ENCODE measurements at regions of chr7 and their contacts with region 1.

Region 1: DNA sequence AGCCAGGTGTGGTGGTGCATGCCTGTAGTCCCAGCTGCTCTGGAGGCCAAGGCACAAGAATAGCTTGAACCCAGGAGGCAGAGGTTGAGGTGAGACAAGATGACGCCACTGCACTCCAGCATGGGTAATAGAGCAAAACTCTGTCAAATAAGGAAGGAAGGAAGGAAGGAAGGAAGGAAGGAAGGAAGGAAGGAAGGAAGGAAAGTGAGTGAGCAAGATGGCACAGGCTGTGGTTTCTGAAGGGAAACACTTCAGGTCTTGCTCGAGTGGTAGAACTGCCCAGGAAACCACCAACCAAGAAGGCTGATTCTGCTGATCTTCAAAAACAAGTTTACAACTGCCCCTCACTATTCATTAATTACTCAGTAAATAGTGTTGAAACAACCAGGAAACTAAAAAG is 45.2 kb downstream of the EZH2 start:
- DNase-seq: no peak
- H3K4me3 ChIP-seq: no peak overlapping the region
- H3K27ac ChIP-seq: no peak overlapping the region
- H3K27me3 ChIP-seq: no peaks in the 10 kb centered on the region
- CTCF ChIP-seq: no peak

Region 2: DNA sequence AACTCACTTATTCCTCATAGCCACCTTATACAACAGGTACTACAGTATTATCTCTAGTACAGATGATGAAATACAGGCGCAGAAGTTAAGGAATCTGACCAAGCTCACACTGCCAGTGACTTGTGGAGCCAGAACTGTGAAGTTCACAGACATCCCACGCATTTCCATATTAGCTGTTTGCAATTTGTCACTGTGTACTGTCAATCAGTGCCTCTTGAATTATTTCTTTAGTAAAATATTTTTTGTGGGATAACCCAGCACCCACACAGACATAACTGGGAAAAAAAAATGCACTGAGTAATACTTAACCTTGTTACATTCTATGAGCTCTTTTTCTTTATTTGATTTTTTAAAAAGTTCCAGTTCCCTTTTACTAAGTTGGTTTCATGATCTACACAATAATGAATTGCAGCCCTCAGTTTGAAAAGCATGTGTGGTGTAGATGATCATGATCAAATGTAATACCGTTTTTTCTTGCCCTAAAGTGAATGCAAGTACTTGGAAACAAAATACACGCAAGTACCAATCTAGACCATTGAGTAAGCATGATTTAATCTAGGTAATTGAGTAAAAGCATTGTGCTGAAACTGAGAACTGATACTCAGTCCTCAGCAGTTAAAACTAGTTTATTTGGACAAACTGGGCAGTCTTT is 126.1 kb before region 1 on chr7:
- CTCF ChIA-PET with region 1: no interaction called
- POLR2A ChIA-PET with region 1: interaction called, 10 read pairs
- DNase-seq: no peak
- H3K4me3 ChIP-seq: no peak overlapping the region
- H3K27ac ChIP-seq: no peak overlapping the region
- H3K27me3 ChIP-seq: no peaks in the 10 kb centered on the region
- CTCF ChIP-seq: no peak

Region 3: DNA sequence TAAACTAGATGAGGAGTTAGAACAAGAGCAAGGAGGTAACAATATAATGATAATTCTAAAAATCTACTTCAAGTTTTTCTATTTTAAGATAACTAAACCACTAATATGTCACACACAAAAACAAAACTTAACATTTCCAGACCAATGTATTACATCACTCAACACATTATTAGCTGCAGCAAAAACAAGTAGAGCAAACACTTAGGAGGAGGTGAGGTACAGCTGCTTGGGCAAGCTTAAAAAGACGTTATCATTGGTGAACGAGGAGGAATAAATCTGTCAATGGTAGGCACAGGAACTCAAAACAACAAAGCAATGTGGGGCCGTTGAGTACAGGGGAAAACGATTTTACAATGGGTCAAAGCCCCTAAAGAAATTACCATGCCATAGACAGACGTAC is 13.6 kb before region 1 on chr7:
- CTCF ChIA-PET with region 1: no interaction called
- POLR2A ChIA-PET with region 1: no interaction called
- DNase-seq: no peak
- H3K4me3 ChIP-seq: no peak overlapping the region
- H3K27ac ChIP-seq: no peak overlapping the region
- H3K27me3 ChIP-seq: no peaks in the 10 kb centered on the region
- CTCF ChIP-seq: no peak

Region 4: DNA sequence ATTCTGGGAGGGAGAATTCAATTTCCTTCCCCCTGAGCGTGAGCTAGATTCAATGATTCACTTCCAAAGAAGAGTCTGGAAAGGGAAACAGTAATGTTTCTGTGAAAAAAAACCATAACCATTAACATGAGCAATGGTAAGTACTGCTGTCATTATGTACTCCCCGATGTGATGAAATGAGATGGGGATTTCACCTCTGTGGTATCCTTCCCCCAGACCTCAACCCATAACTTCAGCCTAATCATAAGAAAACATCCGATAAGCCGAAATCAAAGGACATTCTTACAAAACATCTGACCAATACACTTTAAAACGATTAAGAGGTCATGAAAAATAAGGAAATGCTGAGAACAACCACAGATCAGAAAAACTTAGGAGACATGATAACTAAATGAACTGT is 18.0 kb after region 1 on chr7:
- CTCF ChIA-PET with region 1: interaction called, 10 read pairs
- POLR2A ChIA-PET with region 1: no interaction called
- DNase-seq: no peak
- H3K4me3 ChIP-seq: no peak overlapping the region
- H3K27ac ChIP-seq: no peak overlapping the region
- H3K27me3 ChIP-seq: no peaks in the 10 kb centered on the region
- CTCF ChIP-seq: no peak